Gastrocnemius medialis (tissue), 4 donors: ENCODE measurements at regions of chr16 and their contacts with region 1.

Region 1: GRCh38 chr16:87324411-87325275 is 7.5 kb upstream of the C16orf95 start:
- DNase-seq: peak in 1 of 2 donors; percentile 40
- ATAC-seq: peak in 1 of 2 donors; percentile 53
- H3K4me3 ChIP-seq: peak overlapping the region in 1 of 4 donors; percentile 10
- H3K27ac ChIP-seq: peak overlapping the region; percentile 62 to 78 (median 74)
- H3K4me1 ChIP-seq: peaks cover 35 to 45% of the 10 kb centered on the region in 2 donors
- H3K27me3 ChIP-seq: no peaks in the 10 kb centered on the region
- CTCF ChIP-seq: peak; percentile 74 to 87 (median 85)
- POLR2A ChIP-seq: no peak

Region 2: DNA sequence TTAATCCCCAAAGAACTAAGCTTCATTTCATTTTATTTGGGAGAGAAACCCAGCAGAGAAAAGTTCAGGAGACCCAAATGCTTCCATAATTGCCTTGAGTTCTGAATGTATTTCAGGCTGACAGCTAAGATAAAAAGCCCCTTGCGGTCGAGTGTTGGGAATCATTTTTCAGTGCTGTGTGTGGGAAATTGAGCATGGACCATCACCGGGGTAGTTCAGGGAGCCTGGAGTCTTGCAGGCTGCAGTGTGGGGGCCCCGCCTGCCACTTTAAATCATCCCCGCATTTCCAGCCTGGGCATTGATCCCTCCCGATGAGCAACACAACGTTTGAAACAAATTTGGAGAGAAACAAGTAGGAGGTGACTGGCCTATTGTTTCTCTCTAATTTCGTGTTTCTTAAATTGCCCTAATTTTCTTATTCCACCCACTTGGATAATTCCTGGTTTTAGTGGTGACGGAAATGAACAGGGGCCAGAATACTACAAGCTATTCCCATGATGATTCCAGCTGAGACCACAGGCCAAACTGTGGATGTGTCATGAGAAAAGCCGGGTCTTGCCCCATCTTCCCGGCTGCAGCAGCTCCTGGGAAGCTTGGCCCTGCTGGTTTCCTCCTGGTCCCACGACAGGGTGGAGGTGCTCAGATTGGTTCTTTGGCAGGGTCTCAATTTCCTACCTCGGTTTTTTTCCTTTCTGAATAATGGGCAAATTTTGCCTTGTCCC is 671.2 kb before region 1 on chr16:
- in situ Hi-C with region 1: no loop called
- intact Hi-C with region 1: no loop called
- DNase-seq: no peak
- ATAC-seq: no peak
- H3K4me3 ChIP-seq: no peak overlapping the region
- H3K27ac ChIP-seq: peak overlapping the region in 3 of 4 donors; percentile 33 to 54 (median 52)
- H3K4me1 ChIP-seq: peaks cover 4 to 9% of the 10 kb centered on the region in 2 donors
- H3K27me3 ChIP-seq: no peaks in the 10 kb centered on the region
- CTCF ChIP-seq: no peak
- POLR2A ChIP-seq: no peak

Region 3: DNA sequence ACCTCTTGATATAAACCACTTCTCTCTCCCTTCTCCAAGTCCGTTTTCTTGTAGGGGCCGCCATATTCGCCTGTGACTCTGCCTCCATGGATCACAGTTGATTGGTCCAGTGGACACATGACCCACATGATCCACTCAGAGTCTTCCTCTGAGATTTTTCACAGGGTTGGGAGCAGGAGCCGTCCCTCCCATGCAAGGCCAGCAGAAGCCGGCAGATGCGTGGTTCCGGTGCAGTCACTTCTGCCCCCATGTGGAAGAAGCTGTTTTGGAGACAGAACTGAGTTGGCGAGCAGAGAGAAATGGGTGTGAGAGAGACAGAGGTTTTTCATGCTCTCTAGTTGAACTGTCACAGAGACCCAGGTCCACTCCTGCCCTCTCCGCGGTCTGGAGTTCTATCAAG is 90.7 kb before region 1 on chr16:
- in situ Hi-C with region 1: no loop called
- intact Hi-C with region 1: no loop called
- DNase-seq: no peak
- ATAC-seq: no peak
- H3K4me3 ChIP-seq: no peak overlapping the region
- H3K27ac ChIP-seq: no peak overlapping the region
- H3K4me1 ChIP-seq: no peaks in the 10 kb centered on the region
- H3K27me3 ChIP-seq: no peaks in the 10 kb centered on the region
- CTCF ChIP-seq: no peak
- POLR2A ChIP-seq: no peak

Region 4: GRCh38 chr16:87375426-87376135 is 50.9 kb after region 1 on chr16:
- in situ Hi-C with region 1: loop called in 1 of 4 experiments (anchors 10 kb)
- intact Hi-C with region 1: no loop called
- DNase-seq: peak; percentile 63 to 71
- ATAC-seq: peak; percentile 86 to 89
- H3K4me3 ChIP-seq: peak overlapping the region; percentile 39 to 55 (median 42)
- H3K27ac ChIP-seq: peak overlapping the region; percentile 93 to 97 (median 94)
- H3K4me1 ChIP-seq: peaks cover 70 to 71% of the 10 kb centered on the region in 2 donors
- H3K27me3 ChIP-seq: no peaks in the 10 kb centered on the region
- CTCF ChIP-seq: no peak
- POLR2A ChIP-seq: peak; percentile 33 to 63

Region 5: DNA sequence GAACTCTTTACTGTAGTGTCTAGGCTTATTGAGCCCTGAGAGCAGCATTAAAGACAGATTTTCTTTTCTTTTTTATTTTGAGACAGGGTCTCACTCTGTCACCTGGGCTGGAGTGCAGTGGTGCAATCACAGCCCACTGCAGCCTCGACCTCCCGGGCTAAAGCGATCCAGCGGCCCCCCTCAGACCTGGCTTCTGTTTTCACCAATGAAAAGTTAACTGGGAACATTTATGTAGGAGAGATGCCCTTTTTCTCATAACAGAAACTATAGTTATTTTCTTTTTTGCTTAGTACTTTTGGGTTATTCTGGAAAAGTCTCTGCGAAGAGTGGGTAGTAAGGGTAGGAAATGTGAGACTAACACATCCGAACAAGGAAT is 69.0 kb after region 1 on chr16:
- in situ Hi-C with region 1: loop called (anchors 5 to 10 kb)
- intact Hi-C with region 1: loop called (anchors 2 kb)
- DNase-seq: no peak
- ATAC-seq: no peak
- H3K4me3 ChIP-seq: peak overlapping the region; percentile 65 to 79 (median 76)
- H3K27ac ChIP-seq: peak overlapping the region; percentile 97 to 99 (median 98)
- H3K4me1 ChIP-seq: peaks cover 34 to 37% of the 10 kb centered on the region in 2 donors
- H3K27me3 ChIP-seq: no peaks in the 10 kb centered on the region
- CTCF ChIP-seq: no peak
- POLR2A ChIP-seq: no peak